Vagina (tissue), 2 donors: ENCODE measurements at regions of chr13 and their contacts with region 1.

Region 1: GRCh38 chr13:39245688-39246087 is 207.4 kb downstream of the NHLRC3 start:
- DNase-seq: no peak
- H3K4me3 ChIP-seq: no peak overlapping the region
- H3K27ac ChIP-seq: no peak overlapping the region
- H3K4me1 ChIP-seq: no peaks in the 10 kb centered on the region
- H3K27me3 ChIP-seq: no peaks in the 10 kb centered on the region
- CTCF ChIP-seq: no peak
- POLR2A ChIP-seq: no peak

Region 2: GRCh38 chr13:40596484-40596883 is 1350.8 kb after region 1 on chr13:
- intact Hi-C with region 1: loop called (anchors 5 kb)
- DNase-seq: no peak
- H3K4me3 ChIP-seq: no peak overlapping the region
- H3K27ac ChIP-seq: no peak overlapping the region
- H3K4me1 ChIP-seq: peaks cover 52% of the 10 kb centered on the region
- H3K27me3 ChIP-seq: no peaks in the 10 kb centered on the region
- CTCF ChIP-seq: no peak
- POLR2A ChIP-seq: no peak